Heart right ventricle (tissue), 16 donors: ENCODE measurements at regions of chr9 and their contacts with region 1.

Region 1: DNA sequence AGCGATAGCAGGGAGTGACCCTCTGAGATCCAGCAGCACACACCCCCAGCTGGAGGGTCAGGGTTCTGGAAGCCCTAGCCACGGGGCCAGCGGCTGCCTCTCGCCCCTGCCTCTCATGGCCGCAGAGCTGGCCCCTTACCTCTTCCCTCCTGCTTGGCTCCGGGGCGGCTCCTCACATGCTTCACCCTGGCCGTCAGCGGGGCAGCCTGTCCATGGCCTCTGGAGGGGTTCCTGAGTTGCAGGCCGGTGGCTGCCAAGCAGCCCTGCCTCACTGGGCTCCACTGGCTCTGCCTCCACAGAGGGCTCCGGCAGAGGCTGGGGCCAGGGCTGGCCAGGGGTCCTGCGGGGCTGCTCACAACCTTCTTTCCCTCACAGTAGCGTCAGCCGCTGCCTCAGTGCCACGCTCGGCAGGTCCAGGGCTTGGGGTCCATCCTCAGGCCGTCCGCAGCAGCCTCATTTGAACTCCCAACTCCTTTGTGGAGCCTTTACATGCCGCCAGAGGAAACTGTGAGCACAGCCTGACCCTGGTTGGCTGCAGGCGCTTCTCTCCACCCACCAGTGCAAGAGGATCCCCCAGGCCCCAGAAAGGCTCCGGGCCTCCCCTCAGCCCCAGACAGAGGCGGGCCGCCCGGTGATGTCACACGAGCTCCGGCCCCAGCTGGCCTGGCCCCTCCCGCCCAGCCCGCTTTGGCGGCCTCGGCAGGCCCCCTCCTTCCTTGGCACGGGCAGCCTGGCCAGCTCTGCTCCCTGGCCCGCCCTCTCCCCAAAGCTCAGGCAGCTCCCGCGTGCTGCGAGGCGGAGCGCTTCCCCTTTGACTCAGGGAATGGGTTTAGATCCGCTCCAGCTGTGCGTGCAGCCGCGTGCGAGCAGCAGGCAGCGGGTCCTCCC is at the start of gene ANGPTL2:
- DNase-seq: peak; percentile 93
- ATAC-seq: peak; percentile 93 to 95 (median 94)
- H3K4me3 ChIP-seq: peak within 1 kb of the TSS; percentile 50 to 94 (median 76)
- H3K27ac ChIP-seq: peak within 1 kb of the TSS; percentile 26 to 98 (median 90)
- H3K4me1 ChIP-seq: peaks cover 9 to 69% (median 46%) of the 10 kb centered on the region in 9 donors
- H3K27me3 ChIP-seq: peaks cover 0 to 29% (median 0%) of the 10 kb centered on the region in 7 donors
- CTCF ChIP-seq: no peak
- total RNA-seq, gene ANGPTL2: 24.2 to 73.5 (median 45.2) TPM

Region 2: DNA sequence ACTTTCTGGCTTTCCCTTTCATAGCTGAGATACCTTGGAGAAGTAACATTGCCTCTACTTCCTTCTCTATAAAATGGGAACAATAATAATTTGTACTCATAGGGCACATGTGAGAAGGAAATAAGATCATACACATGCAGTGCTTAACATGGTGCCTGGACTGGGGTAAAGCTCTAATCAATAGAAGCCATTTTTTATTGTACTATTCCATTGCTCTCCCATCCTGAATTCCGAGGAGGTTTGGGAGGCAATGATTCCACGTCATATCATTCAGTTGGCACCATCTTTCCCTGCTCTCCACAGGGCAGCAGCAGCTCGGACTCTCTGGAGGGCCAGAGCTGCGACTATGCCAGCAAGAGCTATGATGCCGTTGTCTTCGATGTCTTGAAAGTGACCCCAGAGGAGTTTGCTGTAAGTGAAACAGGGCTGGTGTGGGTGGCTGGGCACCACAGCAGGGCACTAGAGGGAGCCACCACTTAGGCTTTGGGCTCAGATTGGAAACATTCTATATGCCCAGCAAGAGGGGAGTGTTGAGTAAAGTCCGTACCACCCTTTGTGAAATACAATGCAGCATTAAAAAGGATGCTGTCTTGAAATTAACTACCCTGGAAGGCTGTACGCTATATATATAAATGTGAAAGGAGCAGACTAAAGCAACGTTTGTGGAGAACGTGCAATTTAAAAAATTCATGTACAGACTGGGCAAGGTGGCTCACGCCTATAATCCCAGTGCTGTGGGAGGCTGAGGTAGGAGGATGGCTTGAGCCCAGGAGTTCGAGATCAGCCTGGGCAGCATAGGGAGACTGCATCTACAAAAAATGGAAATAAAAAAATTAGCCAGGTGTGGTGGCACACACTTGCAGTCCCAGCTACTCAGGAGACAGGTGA is 156.6 kb before region 1 on chr9:
- intact Hi-C with region 1: loop called in 2 of 10 experiments (anchors 5 to 10 kb)
- DNase-seq: peak; percentile 52 to 55
- ATAC-seq: peak; percentile 65 to 88 (median 84)
- H3K4me3 ChIP-seq: no peak overlapping the region
- H3K27ac ChIP-seq: peak overlapping the region; percentile 3 to 81 (median 62)
- H3K4me1 ChIP-seq: peaks cover 0 to 34% (median 10%) of the 10 kb centered on the region in 9 donors
- H3K27me3 ChIP-seq: no peaks in the 10 kb centered on the region
- CTCF ChIP-seq: peak; percentile 59 to 89 (median 80)

Region 3: GRCh38 chr9:127035951-127036350 is 86.5 kb before region 1 on chr9:
- intact Hi-C with region 1: loop called in 1 of 10 experiments (anchors 10 kb)
- DNase-seq: peak; percentile 59 to 63
- ATAC-seq: peak; percentile 76 to 90 (median 84)
- H3K4me3 ChIP-seq: no peak overlapping the region
- H3K27ac ChIP-seq: peak overlapping the region in 9 of 10 donors; percentile 11 to 84 (median 69)
- H3K4me1 ChIP-seq: peaks cover 0 to 46% (median 30%) of the 10 kb centered on the region in 9 donors
- H3K27me3 ChIP-seq: no peaks in the 10 kb centered on the region
- CTCF ChIP-seq: no peak

Region 4: DNA sequence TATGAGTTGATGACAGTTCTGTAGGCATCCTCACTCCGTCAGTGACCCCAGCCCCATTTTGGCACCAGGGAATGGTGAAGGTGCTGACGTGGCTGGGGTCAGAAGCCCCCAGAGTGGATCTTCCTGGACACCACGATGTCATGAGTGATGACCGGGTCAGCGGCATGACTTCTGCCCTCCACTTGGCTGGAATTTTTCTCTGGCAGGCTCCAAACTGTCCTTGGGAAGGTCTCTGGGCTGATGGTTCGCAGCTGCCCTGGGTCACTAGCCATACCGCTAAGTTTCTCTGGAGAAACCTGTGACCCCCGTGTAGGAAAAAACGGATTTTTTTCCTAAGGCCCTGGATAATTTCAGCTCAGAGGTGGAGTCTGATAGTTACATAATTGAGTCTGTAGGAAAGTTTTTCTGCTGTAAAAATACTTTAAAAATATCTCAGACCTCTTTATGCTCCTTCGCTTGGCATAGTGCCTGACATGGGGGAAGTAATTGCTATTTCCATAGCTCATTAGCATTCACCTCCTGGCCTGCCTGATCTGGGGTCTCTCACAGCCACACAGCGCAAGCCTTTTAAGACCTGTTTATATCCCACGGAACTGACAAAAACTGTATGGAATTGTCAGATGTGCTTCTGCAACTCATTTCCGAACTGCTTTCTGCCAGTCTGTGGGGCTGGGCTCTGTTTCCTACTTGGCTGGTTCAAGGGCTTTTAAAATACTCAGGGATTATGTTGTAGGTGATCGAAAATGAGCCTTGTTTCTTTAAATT is 69.2 kb before region 1 on chr9:
- intact Hi-C with region 1: loop called in 1 of 10 experiments (anchors 5 kb)
- DNase-seq: peak; percentile 17 to 55
- ATAC-seq: peak in 5 of 8 donors; percentile 5 to 47 (median 42)
- H3K4me3 ChIP-seq: no peak overlapping the region
- H3K27ac ChIP-seq: peak overlapping the region in 9 of 10 donors; percentile 36 to 81 (median 68)
- H3K4me1 ChIP-seq: peaks cover 22 to 100% (median 60%) of the 10 kb centered on the region in 9 donors
- H3K27me3 ChIP-seq: no peaks in the 10 kb centered on the region
- CTCF ChIP-seq: no peak

Region 5: GRCh38 chr9:127074561-127075548 is 47.6 kb before region 1 on chr9:
- intact Hi-C with region 1: loop called in 1 of 10 experiments (anchors 5 kb)
- DNase-seq: peak in 1 of 2 donors; percentile 58
- ATAC-seq: peak; percentile 84 to 96 (median 92)
- H3K4me3 ChIP-seq: no peak overlapping the region
- H3K27ac ChIP-seq: peak overlapping the region in 6 of 10 donors; percentile 41 to 68 (median 60)
- H3K4me1 ChIP-seq: peaks cover 7 to 58% (median 32%) of the 10 kb centered on the region in 9 donors
- H3K27me3 ChIP-seq: no peaks in the 10 kb centered on the region
- CTCF ChIP-seq: peak in 1 of 9 donors; percentile 15

Region 6: DNA sequence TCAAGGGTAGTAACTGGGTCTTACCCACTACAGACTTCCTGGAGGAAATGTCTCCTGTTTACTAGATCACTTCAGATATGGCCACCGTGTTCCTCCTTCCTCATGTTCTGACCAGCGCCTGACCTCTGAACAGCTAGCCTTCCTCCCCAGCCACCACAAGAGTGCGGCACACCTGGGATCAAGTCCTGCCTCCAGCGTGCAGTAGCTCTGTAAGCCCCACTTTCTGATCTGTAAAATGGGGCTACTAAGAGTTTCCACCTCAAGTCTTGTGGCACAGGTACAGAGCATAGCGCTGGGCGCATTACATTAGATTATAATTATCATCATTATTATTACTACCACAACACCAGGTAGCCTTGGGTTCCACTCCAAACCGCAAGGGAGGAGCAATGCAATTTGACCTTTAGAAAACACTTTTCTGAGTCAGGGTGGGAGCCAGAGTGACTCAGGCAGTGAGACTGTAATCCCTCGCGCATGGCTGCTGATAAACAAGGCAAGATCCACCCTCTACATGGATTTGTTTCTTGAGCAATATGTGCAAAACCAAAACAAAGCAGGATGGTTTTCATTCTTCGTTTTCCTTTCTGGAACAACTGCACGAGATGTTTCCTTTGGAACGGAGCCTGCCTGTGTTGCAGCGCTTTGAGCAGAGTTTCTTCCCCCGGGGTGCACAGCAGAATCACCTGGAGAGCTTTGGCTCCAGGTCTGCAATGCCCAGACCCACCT is 65.0 kb after region 1 on chr9:
- intact Hi-C with region 1: loop called in 2 of 10 experiments (anchors 5 kb)
- DNase-seq: peak in 1 of 2 donors; percentile 61
- ATAC-seq: peak; percentile 27 to 65 (median 38)
- H3K4me3 ChIP-seq: no peak overlapping the region
- H3K27ac ChIP-seq: peak overlapping the region; percentile 77 to 97 (median 88)
- H3K4me1 ChIP-seq: peaks cover 26 to 63% (median 54%) of the 10 kb centered on the region in 9 donors
- H3K27me3 ChIP-seq: no peaks in the 10 kb centered on the region
- CTCF ChIP-seq: no peak

Region 7: DNA sequence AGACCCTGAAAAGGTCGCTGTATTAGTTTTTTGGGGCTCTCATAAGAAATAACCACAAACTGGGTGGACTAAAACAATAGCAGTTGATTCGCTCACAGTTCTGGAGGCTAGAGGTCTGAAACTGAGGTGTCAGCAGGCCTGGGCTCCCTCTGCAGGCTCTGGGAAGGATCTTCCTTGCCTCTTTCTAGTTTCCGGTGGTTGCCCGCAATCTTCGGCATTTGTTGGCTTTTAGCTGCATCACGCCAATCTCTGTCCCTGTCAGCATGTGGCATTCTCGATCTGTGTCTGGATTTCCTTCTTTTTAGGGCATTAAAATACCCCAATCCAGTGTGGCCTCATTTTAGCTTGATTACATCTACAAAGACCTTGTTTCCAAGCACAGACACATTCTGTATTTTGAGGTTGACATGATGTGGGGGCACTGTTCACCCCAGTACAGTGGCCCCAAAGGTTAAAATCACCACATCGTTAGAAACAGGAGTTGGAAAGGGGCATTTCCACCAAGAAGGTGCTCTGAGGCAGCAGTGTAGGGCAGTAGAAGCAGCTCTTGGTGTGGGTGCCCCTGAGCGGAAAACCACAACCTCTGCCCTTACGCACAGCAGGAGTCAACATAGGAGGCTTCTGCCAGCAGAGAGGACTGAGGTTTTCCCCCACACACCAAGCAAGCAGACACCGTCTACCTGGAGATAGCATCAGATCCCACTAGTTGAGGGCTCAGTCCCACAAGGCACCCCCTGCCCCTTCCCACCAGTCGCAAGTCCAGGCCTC is 315.3 kb after region 1 on chr9:
- intact Hi-C with region 1: no loop called
- DNase-seq: no peak
- ATAC-seq: no peak
- H3K4me3 ChIP-seq: no peak overlapping the region
- H3K27ac ChIP-seq: no peak overlapping the region
- H3K4me1 ChIP-seq: no peaks in the 10 kb centered on the region
- H3K27me3 ChIP-seq: no peaks in the 10 kb centered on the region
- CTCF ChIP-seq: no peak